PC-3 (cell line): ENCODE measurements at regions of chr5 and their contacts with region 1.

Region 1: GRCh38 chr5:9498541-9499497 is 47.1 kb downstream of the SEMA5A start:
- DNase-seq: peak; percentile 94
- ATAC-seq: peak; percentile 92
- H3K4me3 ChIP-seq: no peak overlapping the region
- H3K27ac ChIP-seq: no peak overlapping the region
- H3K4me1 ChIP-seq: peaks cover 5% of the 10 kb centered on the region; the same call in 1 of the 2 replicates
- H3K27me3 ChIP-seq: no peaks in the 10 kb centered on the region
- CTCF ChIP-seq: peak; percentile 98

Region 2: GRCh38 chr5:9156282-9156681 is 342.5 kb before region 1 on chr5:
- CTCF ChIA-PET with region 1: interaction called, 4 read pairs
- POLR2A ChIA-PET with region 1: no interaction called
- intact Hi-C with region 1: loop called (anchors 5 kb)
- DNase-seq: peak; percentile 86
- ATAC-seq: peak; percentile 87
- H3K4me3 ChIP-seq: no peak overlapping the region
- H3K27ac ChIP-seq: no peak overlapping the region
- H3K4me1 ChIP-seq: peaks cover 14% of the 10 kb centered on the region
- H3K27me3 ChIP-seq: no peaks in the 10 kb centered on the region
- CTCF ChIP-seq: peak; percentile 95

Region 3: DNA sequence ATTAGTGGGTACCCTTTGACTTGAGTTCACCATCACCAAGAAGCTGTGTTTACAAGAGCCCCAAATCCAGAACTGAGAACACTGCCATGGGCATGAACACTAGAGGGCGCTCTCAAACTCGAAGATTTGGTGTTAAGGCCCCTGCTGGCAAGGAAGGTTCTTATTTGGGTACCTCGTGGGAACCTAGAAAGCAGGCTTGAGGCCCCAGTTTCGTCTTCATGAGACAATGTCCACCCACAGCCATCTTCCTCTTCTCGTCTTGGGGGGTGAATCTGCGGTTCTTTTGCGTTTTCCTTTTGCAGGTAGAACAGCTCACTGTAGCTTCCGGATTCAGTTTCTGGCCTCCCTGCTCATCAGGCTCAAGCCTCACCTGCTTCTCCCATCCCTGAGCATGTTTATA is 137.0 kb before region 1 on chr5:
- CTCF ChIA-PET with region 1: no interaction called
- POLR2A ChIA-PET with region 1: no interaction called
- intact Hi-C with region 1: loop called (anchors 1 kb)
- DNase-seq: peak; percentile 97
- ATAC-seq: peak; percentile 74
- H3K4me3 ChIP-seq: no peak overlapping the region
- H3K27ac ChIP-seq: no peak overlapping the region
- H3K4me1 ChIP-seq: peaks cover 15% of the 10 kb centered on the region
- H3K27me3 ChIP-seq: no peaks in the 10 kb centered on the region
- CTCF ChIP-seq: peak; percentile 100

Region 4: DNA sequence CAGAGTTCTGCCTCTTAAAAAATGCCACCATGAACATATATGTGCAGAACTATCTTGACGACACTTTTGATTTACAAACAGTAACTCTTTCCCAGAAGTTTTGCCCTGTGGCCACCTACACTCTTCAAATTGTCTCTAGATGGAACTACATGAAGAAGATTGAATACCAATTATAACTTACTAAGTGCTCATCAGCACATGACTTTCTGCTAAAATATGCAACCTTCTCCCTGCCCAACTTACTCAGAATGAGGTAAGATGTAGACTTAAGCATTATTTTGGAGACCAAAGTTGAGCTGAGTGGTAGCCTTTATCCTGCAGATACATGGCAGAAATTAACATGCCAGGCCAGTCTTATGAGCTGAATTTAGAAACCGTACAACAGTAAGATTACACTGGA is 58.3 kb before region 1 on chr5:
- CTCF ChIA-PET with region 1: no interaction called
- POLR2A ChIA-PET with region 1: no interaction called
- intact Hi-C with region 1: loop called (anchors 5 kb)
- DNase-seq: peak; percentile 98
- ATAC-seq: peak; percentile 85
- H3K4me3 ChIP-seq: no peak overlapping the region; the same call in 1 of the 2 replicates
- H3K27ac ChIP-seq: peak overlapping the region; percentile 93
- H3K4me1 ChIP-seq: peaks cover 48% of the 10 kb centered on the region
- H3K27me3 ChIP-seq: no peaks in the 10 kb centered on the region
- CTCF ChIP-seq: no peak